BJ (cell line): ENCODE measurements at regions of chr11 and their contacts with region 1.

Region 1: GRCh38 chr11:66386171-66387069 is 14.9 kb upstream of the SLC29A2 start:
- DNase-seq: peak; percentile 44
- H3K4me3 ChIP-seq: 0 out of 2 replicates have a peak overlapping the region, but pooled peaks have one; percentile 5
- H3K27me3 ChIP-seq: no peaks in the 10 kb centered on the region
- CTCF ChIP-seq: peak; percentile 98

Region 2: DNA sequence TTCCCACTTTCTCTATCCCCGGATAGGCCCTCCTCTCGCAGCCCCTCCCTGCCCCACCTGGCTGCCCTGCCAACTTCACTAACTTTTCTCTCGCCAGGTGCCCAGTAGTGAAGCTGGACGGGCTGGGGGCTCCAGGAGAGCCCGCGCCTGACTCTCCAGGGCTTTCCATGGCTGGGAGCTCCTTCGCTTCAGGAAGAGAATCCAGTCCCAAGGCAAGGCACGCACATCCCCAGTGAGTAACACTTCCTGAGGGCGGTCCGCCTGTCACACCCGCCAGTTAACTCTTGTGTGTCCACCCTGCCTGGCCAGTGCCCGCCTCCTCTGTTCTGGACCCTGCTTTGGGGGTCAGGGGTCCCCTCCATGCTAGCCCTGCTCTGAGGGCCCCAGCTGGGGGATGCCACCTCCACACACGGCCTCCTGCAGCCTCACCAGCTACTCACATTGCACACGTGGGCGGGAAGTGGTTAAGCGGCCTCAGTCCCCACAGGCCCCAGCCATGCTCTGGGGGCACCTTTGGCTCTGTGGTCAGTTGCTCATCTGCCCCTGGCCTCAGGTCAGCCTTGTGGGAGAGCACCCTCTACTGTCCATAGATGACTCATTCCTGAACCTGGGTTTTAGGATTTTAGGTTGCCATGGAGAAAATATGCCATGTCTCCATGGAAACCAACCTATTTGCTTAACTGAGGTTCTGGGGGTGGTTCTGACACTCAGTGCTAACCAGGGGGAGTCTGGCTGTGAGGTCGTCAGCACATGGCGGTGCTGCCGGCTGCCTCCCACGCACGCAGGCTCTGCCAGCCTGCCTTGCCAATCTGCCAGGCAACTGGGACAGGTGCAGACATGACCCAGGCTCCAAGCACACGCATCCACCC is 50.0 kb before region 1 on chr11 and contains the start of gene RIN1:
- CTCF ChIA-PET with region 1: interaction called, 17 read pairs
- POLR2A ChIA-PET with region 1: no interaction called
- DNase-seq: peak; percentile 93
- H3K4me3 ChIP-seq: peak within 1 kb of the TSS; percentile 78
- H3K27me3 ChIP-seq: no peaks in the 10 kb centered on the region
- CTCF ChIP-seq: peak; percentile 39
- polyA plus RNA-seq, gene RIN1: 6.3 and 9.2 TPM in 2 replicates

Region 3: DNA sequence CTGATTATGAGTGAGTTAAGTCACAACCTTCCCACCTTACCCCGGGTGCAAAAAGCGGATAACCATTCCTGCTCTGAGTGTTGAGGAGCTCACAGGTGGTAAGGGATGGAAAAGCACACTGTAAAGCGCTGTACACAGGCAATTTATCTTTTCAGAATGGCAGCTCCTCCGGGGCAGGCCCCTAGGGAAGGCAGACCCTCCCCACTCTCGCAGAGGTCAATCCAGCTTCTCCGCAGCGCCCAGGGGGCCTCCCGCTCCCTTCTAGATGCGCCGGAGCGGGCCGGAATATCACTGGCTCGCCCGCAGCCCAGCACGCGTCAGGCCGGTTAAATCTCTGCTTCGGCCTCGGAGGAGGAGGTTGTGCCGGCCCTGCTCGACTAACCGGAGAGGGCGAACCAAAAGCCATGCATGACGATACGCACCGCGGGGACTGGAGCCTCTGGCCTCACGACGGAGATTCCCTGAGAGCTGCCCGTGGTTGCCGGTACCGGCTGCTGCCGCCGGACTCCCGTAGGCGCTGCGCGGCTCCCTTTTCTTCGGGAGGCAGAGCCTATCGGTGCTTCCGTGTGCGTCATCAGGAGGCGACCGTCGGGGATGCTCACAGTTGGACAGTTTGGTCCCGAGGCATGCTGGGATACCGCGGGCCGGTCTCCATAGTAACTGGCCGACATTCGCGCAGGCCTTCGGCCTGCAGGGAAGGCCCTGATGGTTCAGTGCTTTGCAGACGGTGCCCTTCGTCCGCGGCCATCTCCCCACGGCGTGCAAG is 41.7 kb before region 1 on chr11 and contains the start of gene BRMS1:
- CTCF ChIA-PET with region 1: interaction called, 12 read pairs
- POLR2A ChIA-PET with region 1: no interaction called
- DNase-seq: peak; percentile 80
- H3K4me3 ChIP-seq: peak within 1 kb of the TSS; percentile 98
- H3K27me3 ChIP-seq: no peaks in the 10 kb centered on the region
- CTCF ChIP-seq: peak; percentile 33; the same call in 1 of the 2 replicates
- polyA plus RNA-seq, gene BRMS1: 36.7 and 46.3 TPM in 2 replicates

Region 4: GRCh38 chr11:66363805-66364535 is 22.4 kb before region 1 on chr11:
- CTCF ChIA-PET with region 1: interaction called, 12 read pairs
- POLR2A ChIA-PET with region 1: no interaction called
- DNase-seq: no peak
- H3K4me3 ChIP-seq: no peak overlapping the region
- H3K27me3 ChIP-seq: no peaks in the 10 kb centered on the region
- CTCF ChIP-seq: peak; percentile 73

Region 5: DNA sequence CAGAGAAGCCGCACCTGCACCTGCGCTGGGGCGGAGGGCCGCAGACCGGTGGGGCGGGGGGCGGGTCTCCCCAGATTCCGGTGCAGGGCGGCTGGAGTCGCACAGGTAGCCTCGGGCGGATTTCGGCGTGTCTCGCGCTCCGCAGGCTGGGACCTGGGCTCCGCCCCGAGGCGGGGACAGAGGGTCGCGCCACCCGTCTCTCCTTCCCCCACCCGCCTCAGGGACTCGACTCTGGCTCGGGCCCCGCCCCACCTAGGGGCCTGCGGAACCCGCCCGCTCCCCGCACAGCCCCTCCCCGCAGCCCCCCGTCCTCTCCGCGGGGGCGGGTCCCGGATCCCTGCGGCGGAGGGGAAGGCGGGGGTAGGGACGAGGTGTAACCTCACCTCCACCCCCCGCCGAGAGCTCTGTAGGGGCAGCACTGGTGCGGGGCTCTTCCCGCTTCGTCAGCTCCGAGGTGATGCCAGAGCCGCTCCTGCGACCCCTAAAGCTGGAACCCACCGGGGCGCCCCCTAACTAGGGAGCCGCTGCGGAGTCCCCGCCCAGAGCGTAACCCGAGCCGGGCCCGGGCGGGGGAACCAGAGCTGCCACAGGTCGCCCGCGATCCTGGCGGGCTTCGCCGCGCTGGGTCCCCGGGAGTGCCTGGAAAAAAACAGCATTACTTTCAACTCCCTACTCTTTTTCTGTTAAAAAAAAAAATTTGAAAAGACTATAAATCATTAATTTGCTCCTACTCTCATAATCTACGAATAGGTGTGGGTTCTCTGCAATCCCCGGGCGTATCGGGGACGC is 14.6 kb before region 1 on chr11 and contains the start of gene SLC29A2:
- CTCF ChIA-PET with region 1: interaction called, 40 read pairs
- POLR2A ChIA-PET with region 1: interaction called, 3 read pairs
- DNase-seq: no peak
- H3K4me3 ChIP-seq: peak within 1 kb of the TSS; percentile 58
- H3K27me3 ChIP-seq: peaks cover 7% of the 10 kb centered on the region; the same call in 1 of the 2 replicates
- CTCF ChIP-seq: no peak
- polyA plus RNA-seq, gene SLC29A2: 0.21 and 0.48 TPM in 2 replicates

Region 6: GRCh38 chr11:66450560-66450959 is 64.1 kb after region 1 on chr11:
- CTCF ChIA-PET with region 1: no interaction called
- POLR2A ChIA-PET with region 1: no interaction called
- DNase-seq: no peak
- H3K4me3 ChIP-seq: no peak overlapping the region
- H3K27me3 ChIP-seq: peaks cover 19% of the 10 kb centered on the region
- CTCF ChIP-seq: no peak

Region 7: GRCh38 chr11:66489636-66490035 is 103.2 kb after region 1 on chr11:
- CTCF ChIA-PET with region 1: no interaction called
- POLR2A ChIA-PET with region 1: no interaction called
- DNase-seq: no peak
- H3K4me3 ChIP-seq: no peak overlapping the region
- H3K27me3 ChIP-seq: no peaks in the 10 kb centered on the region
- CTCF ChIP-seq: no peak

Region 8: DNA sequence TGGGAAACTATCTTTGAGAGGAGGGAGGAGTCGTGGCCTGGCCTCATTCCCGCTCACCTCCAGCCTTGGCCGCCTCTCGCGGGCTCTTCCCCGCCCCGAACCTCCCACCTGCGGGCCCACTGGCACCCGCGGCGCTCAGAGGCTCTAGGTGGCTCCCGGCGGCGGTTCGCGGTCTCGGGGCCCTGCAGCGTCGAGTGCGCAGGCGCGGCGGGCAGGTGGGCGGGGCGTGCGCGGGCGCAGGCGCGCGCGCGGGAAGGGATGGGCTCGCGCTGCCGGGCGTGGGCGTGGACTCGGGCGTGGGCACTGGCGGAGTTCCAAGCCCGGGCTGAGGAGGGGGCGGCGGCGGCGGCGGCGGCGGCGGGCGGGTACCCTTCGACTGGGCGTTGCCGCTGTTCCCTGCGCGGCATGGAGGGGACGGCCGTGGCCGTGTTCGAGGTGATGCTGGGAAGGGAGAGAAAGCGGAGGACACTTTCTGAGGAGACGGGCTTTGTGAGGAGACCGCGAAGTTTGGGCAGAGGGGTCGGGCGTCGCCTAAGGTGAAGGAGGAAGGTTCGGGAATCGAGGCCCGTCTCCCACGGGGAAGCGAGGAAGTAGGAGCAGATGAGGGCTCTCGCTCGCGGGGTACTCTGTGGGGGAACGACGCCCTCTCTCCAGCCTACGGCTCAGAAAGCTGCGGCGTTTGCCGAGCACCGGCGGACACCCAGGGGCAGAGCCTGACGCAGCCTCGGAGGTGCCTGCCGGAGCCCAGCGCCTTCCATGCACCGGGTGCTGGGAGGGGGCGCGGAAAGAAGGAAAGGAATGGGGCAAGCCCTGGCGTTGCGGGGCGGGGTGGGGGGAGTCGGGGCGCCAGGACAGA is 358.3 kb after region 1 on chr11:
- CTCF ChIA-PET with region 1: no interaction called
- POLR2A ChIA-PET with region 1: no interaction called
- DNase-seq: peak; percentile 10
- H3K4me3 ChIP-seq: peak overlapping the region; percentile 96
- H3K27me3 ChIP-seq: no peaks in the 10 kb centered on the region
- CTCF ChIP-seq: no peak